Testis (tissue), 5 donors: ENCODE measurements at regions of chr2 and their contacts with region 1.

Region 1: GRCh38 chr2:168773719-168774521 is 28.5 kb upstream of the NOSTRIN start:
- DNase-seq: peak; percentile 84
- H3K4me3 ChIP-seq: no peak overlapping the region
- H3K27ac ChIP-seq: no peak overlapping the region
- H3K4me1 ChIP-seq: no peaks in the 10 kb centered on the region
- H3K27me3 ChIP-seq: no peaks in the 10 kb centered on the region
- CTCF ChIP-seq: peak; percentile 63 to 90 (median 79)
- POLR2A ChIP-seq: no peak

Region 2: GRCh38 chr2:168920504-168921157 is 146.7 kb after region 1 on chr2:
- intact Hi-C with region 1: loop called (anchors 10 kb)
- DNase-seq: no peak
- H3K4me3 ChIP-seq: no peak overlapping the region
- H3K27ac ChIP-seq: no peak overlapping the region
- H3K4me1 ChIP-seq: no peaks in the 10 kb centered on the region
- H3K27me3 ChIP-seq: no peaks in the 10 kb centered on the region
- CTCF ChIP-seq: peak; percentile 46 to 86 (median 74)
- POLR2A ChIP-seq: no peak